ENCODE measurements at regions of chr4 and their contacts with region 1.

Region 1: GRCh38 chr4:165537028-165537648 is 158.3 kb downstream of the CPE start:
- DNase-seq: no peak
- H3K4me3 ChIP-seq: no peak overlapping the region
- H3K27ac ChIP-seq: no peak overlapping the region
- H3K27me3 ChIP-seq: no peaks in the 10 kb centered on the region
- CTCF ChIP-seq: peak; percentile 67

Region 2: DNA sequence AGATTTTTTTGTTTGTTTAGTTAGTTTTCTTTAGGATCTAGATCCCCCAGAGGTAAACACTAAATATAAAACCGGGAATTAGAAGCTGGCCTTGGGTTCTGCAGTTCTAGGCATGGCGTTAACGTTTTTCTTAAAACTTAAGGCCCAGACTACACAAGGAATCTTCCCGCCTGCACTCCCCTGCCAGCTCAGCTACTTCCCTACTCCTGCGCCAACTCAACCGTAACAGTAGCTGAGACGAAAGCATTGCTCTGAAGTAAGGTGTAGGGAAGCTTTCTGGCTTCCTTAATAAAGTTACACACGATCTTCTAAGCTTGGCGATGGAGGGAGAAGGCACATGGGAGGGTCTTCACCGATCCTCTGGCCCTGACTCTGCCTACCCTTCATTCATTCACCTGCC is 121.2 kb before region 1 on chr4:
- CTCF ChIA-PET with region 1: no interaction called
- POLR2A ChIA-PET with region 1: no interaction called
- DNase-seq: no peak
- H3K4me3 ChIP-seq: no peak overlapping the region
- H3K27ac ChIP-seq: no peak overlapping the region
- H3K27me3 ChIP-seq: no peaks in the 10 kb centered on the region
- CTCF ChIP-seq: no peak

Region 3: GRCh38 chr4:165893311-165893710 is 356.2 kb after region 1 on chr4:
- CTCF ChIA-PET with region 1: no interaction called
- POLR2A ChIA-PET with region 1: no interaction called
- DNase-seq: no peak
- H3K4me3 ChIP-seq: no peak overlapping the region
- H3K27ac ChIP-seq: no peak overlapping the region
- H3K27me3 ChIP-seq: no peaks in the 10 kb centered on the region
- CTCF ChIP-seq: no peak

Region 4: GRCh38 chr4:166091912-166092510 is 554.9 kb after region 1 on chr4:
- CTCF ChIA-PET with region 1: interaction called, 20 read pairs
- POLR2A ChIA-PET with region 1: no interaction called
- DNase-seq: no peak
- H3K4me3 ChIP-seq: no peak overlapping the region
- H3K27ac ChIP-seq: no peak overlapping the region
- H3K27me3 ChIP-seq: no peaks in the 10 kb centered on the region
- CTCF ChIP-seq: peak; percentile 75

Region 5: DNA sequence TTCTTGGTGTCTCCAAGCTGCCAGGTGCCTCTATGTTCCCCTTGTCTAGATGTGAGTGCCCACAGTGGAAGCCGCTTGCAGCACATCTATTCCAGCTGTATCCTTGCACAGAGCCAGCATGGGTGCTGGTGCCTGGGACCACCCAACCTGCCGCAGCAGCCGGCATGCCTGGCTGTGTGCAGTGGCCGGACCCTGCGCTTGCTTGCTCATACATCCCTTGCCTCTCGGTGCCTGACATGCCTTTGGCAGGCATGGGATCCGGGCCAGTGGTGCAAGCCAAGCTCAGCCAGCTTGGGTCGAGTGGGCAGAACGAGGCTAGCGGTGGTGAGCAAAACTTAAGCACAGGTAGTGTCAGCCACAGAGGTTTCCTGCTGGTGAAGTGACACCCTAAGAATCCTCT is 691.0 kb after region 1 on chr4:
- CTCF ChIA-PET with region 1: no interaction called
- POLR2A ChIA-PET with region 1: no interaction called
- DNase-seq: no peak
- H3K4me3 ChIP-seq: no peak overlapping the region
- H3K27ac ChIP-seq: no peak overlapping the region
- H3K27me3 ChIP-seq: no peaks in the 10 kb centered on the region
- CTCF ChIP-seq: no peak

Measured in AG04450 (cell line).